IMR-90 (cell line): ENCODE measurements at regions of chr11 and their contacts with region 1.

Region 1: GRCh38 chr11:77542296-77542695 is 47.5 kb upstream of the AQP11 start:
- DNase-seq: peak; percentile 78
- ATAC-seq: peak; percentile 91
- H3K4me3 ChIP-seq: no peak overlapping the region
- H3K27ac ChIP-seq: no peak overlapping the region
- H3K4me1 ChIP-seq: peaks cover 5% of the 10 kb centered on the region
- H3K27me3 ChIP-seq: no peaks in the 10 kb centered on the region
- CTCF ChIP-seq: no peak
- POLR2A ChIP-seq: no peak
- RAD21 ChIP-seq: no peak

Region 2: DNA sequence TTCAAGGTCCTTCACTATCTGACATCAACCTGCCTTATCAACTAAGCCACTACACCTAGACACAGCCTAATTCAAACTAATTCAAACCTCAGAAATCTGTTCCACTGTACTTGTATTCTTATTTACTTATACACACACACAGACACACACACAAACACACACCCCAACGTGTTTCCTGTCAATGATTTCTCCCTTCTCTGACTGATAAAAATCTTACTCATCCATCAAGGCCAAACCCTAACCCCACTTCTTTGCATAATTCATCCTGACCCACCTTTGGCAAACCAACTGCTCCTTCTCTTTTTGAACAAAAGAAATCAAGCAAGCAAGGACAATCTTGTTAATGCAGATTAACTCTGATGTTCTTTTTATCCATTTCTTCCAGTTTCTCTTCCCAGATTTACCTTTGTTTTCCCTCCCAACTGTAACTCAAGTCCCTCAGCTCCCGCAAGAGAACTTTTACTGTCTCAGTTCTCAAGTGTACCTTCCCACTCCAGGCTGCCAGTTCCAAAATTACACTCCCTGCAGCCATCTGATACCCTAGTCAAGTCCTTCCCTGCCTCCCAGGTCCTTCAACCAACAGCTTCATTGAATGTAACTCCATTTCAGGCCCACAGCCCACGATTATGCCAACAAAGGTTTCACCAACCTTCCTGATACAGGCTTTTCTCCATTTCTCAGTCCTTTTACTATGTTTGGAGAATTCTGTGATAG is 146.7 kb before region 1 on chr11:
- CTCF ChIA-PET with region 1: no interaction called
- POLR2A ChIA-PET with region 1: interaction called, 22 read pairs
- dilution Hi-C with region 1: no loop called
- in situ Hi-C with region 1: no loop called
- intact Hi-C with region 1: no loop called
- DNase-seq: no peak
- ATAC-seq: no peak
- H3K4me3 ChIP-seq: no peak overlapping the region
- H3K27ac ChIP-seq: no peak overlapping the region
- H3K4me1 ChIP-seq: no peaks in the 10 kb centered on the region
- H3K27me3 ChIP-seq: no peaks in the 10 kb centered on the region
- CTCF ChIP-seq: no peak
- POLR2A ChIP-seq: no peak
- RAD21 ChIP-seq: no peak